Heart right ventricle (tissue), 16 donors: ENCODE measurements at regions of chr11 and their contacts with region 1.

Region 1: DNA sequence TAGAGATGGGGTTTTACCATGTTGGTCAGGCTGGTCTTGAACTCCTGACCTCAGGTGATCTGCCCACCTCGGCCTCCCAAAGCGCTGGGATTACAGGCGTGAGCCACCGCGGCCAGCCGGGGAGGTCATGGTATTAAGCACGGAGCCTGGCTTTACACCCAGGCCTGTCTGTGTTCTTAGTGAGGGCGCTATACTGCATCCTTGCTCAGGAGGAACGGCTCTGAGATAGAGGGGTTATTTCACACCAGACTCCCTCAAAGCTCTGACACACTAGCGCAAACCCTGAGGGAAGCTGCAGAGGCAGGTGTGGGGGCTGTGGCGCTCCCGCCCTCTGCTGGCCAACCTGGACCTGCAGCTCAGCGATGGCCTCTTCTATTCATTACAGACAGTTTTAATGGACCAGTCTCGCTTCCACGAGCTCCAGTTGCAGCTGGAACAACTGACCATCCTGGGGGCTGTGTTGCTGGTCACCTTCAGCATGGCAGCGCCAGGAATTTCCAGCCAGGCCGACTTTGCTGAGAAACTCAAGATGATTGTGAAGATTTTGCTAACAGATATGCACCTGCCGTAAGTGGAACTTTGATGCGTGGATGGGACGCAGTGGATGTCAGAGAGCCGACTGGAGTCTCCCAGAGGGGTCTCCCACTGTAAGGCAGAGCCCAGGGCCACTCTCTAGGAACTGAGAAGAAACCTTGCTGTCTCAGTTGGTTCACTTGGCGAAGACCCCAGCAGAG is 26.2 kb downstream of the TCP11L1 start:
- DNase-seq: peak; percentile 47 to 54
- ATAC-seq: peak; percentile 47 to 91 (median 83)
- H3K4me3 ChIP-seq: no peak overlapping the region
- H3K27ac ChIP-seq: no peak overlapping the region
- H3K4me1 ChIP-seq: peaks cover 0 to 34% (median 14%) of the 10 kb centered on the region in 9 donors
- H3K27me3 ChIP-seq: no peaks in the 10 kb centered on the region
- CTCF ChIP-seq: peak; percentile 63 to 89 (median 83)

Region 2: DNA sequence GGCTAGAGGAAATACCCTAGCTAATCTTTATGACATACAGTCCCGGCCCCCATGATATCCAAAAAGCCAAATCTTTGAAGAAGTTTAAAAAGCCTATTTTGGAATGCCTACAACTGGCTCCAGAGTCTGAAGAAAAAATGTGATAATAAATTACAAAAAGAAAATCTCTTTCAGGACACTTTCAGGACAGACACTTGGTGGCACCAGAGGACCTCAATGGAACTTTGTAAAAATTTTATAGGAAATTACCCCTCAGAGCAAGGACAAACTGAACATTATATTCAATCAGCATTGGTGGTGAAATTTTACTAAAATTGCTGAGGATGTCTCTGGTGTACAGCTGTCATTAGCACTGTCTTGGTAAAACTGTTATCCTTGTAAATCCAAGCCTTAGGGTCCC is 352.1 kb before region 1 on chr11:
- intact Hi-C with region 1: loop called in 1 of 10 experiments (anchors 5 kb)
- DNase-seq: no peak
- ATAC-seq: no peak
- H3K4me3 ChIP-seq: no peak overlapping the region
- H3K27ac ChIP-seq: no peak overlapping the region
- H3K4me1 ChIP-seq: no peaks in the 10 kb centered on the region
- H3K27me3 ChIP-seq: peaks cover 0 to 36% (median 7%) of the 10 kb centered on the region in 7 donors
- CTCF ChIP-seq: peak in 6 of 9 donors; percentile 16 to 39 (median 25)

Region 3: GRCh38 chr11:32809313-32809712 is 256.3 kb before region 1 on chr11:
- intact Hi-C with region 1: loop called in 5 of 10 experiments (anchors 2 to 10 kb)
- DNase-seq: peak; percentile 30 to 62
- ATAC-seq: peak in 6 of 8 donors; percentile 63 to 91 (median 79)
- H3K4me3 ChIP-seq: no peak overlapping the region
- H3K27ac ChIP-seq: no peak overlapping the region
- H3K4me1 ChIP-seq: no peaks in the 10 kb centered on the region
- H3K27me3 ChIP-seq: peaks cover 0 to 6% (median 0%) of the 10 kb centered on the region in 7 donors
- CTCF ChIP-seq: peak; percentile 24 to 79 (median 68)

Region 4: DNA sequence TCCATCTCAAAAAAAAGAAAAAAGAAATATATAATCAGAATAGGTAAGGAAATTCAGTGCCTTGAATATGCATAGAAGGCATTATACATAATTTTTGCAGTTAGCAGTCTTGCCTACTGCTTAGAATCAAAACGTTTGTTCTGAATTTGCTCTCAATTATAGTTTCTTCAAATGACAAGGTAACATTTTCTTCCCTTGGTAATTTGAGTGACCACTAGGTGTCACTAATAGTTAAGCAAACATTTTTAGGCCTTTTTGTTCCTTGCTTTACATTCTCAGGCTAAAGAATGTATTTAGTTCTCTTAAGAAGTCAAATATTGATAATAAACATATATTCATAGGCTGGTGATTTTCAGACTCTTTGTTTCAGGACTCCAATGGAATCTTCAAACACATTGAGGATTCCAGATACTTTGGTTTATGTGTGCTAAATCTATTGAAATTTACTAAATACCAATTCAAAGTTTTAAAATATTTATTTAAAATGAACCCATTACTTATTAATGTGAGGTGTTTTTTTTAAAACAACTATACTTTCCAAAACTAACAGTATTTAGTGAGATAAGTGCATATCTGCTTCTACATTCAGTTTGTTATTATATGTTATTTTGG is 105.0 kb before region 1 on chr11:
- intact Hi-C with region 1: loop called (anchors 2 to 10 kb)
- DNase-seq: no peak
- ATAC-seq: no peak
- H3K4me3 ChIP-seq: no peak overlapping the region
- H3K27ac ChIP-seq: no peak overlapping the region
- H3K4me1 ChIP-seq: no peaks in the 10 kb centered on the region
- H3K27me3 ChIP-seq: no peaks in the 10 kb centered on the region
- CTCF ChIP-seq: peak; percentile 40 to 80 (median 71)

Region 5: GRCh38 chr11:33362051-33362910 is 296.7 kb after region 1 on chr11:
- intact Hi-C with region 1: no loop called
- DNase-seq: peak in 1 of 2 donors; percentile 24
- ATAC-seq: peak; percentile 9 to 76 (median 51)
- H3K4me3 ChIP-seq: no peak overlapping the region
- H3K27ac ChIP-seq: no peak overlapping the region
- H3K4me1 ChIP-seq: peaks cover 0 to 12% (median 2%) of the 10 kb centered on the region in 9 donors
- H3K27me3 ChIP-seq: no peaks in the 10 kb centered on the region
- CTCF ChIP-seq: peak; percentile 66 to 80 (median 76)